MCF 10A (cell line): ENCODE measurements at regions of chr6 and their contacts with region 1.

Region 1: DNA sequence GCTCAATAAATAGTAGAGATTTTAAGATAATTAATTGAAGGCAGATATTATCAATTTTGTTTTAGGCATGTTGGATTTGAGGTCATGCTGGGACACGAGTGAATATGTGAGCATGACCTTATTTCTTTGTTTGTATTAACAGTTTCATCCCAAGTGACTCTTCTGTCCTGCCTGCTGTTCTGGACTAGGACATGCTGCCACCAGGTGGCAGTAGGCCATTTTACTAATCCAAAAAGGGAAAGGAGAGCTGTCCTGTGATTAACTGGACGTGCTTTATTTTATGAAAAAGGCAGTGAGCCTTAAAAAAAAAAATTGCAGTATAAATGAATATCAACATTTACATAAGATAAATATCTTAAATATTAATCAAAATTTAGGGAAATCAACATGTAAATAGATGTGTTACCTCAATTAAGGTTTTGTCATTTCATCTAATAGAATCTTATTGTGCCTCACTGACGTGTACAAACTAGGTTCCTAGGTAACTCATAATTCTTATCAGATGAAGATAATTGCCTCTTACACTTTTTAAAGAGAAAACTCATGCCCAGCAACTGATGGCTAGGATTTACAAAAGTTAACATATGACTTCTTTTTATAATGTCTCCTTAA is 49.8 kb downstream of the FRK start:
- DNase-seq: peak; percentile 81
- H3K4me3 Mint-ChIP-seq: no peak overlapping the region
- H3K27ac Mint-ChIP-seq: peak overlapping the region; percentile 75
- H3K4me1 Mint-ChIP-seq: peaks cover 27% of the 10 kb centered on the region
- H3K27me3 Mint-ChIP-seq: no peaks in the 10 kb centered on the region
- CTCF ChIP-seq: peak; percentile 81

Region 2: DNA sequence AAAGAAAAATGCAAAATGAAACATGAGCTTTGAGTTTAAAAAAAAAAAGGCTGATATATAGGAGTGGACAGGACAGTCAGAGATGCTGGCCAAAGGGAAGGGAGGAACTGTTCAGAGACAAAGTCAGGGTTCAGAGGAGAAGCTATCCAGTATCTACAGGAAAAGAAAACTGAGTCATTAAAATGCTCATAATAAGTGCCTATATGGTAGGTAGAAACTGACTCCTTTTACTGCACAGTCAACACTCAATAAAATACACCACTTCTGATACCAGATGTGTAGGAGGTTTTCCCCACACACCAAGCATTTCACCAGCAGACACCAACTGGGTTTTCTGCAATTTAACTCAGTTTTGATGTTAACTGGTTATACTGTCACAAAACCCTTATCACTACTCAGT is 16.9 kb after region 1 on chr6:
- CTCF ChIA-PET with region 1: interaction called, 19 read pairs
- POLR2A ChIA-PET with region 1: interaction called, 3 read pairs
- intact Hi-C with region 1: no loop called
- DNase-seq: no peak
- H3K4me3 Mint-ChIP-seq: no peak overlapping the region
- H3K27ac Mint-ChIP-seq: no peak overlapping the region
- H3K4me1 Mint-ChIP-seq: peaks cover 27% of the 10 kb centered on the region
- H3K27me3 Mint-ChIP-seq: no peaks in the 10 kb centered on the region
- CTCF ChIP-seq: no peak

Region 3: GRCh38 chr6:116087437-116088027 is 76.6 kb after region 1 on chr6:
- CTCF ChIA-PET with region 1: interaction called, 49 read pairs
- POLR2A ChIA-PET with region 1: interaction called, 3 read pairs
- intact Hi-C with region 1: no loop called
- DNase-seq: peak; percentile 64
- H3K4me3 Mint-ChIP-seq: no peak overlapping the region
- H3K27ac Mint-ChIP-seq: peak overlapping the region; percentile 16
- H3K4me1 Mint-ChIP-seq: peaks cover 14% of the 10 kb centered on the region
- H3K27me3 Mint-ChIP-seq: no peaks in the 10 kb centered on the region
- CTCF ChIP-seq: no peak